ENCODE measurements at regions of chr2 and their contacts with region 1.

Region 1: DNA sequence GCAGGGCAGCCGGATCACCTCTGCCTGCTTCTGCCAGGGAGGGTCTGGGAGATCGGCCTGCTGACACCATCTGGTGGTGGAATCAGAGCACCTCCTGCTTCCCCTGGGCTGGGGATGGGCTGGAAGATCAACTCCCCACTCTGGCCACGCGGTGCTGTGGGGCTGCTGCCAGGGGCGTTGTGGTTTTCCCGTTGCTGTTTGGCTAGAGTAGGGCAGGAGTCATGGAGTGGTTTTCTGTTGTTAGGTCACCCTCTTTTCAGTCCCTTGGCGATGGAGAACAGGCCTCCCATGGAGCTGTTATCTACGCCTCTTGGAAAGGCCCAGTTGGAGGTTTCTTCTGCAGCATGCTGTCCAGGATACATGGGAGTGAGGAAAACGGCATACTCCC is 15.2 kb downstream of the BCL2L11 start:
- DNase-seq: peak; percentile 90
- H3K4me3 ChIP-seq: no peak overlapping the region
- CTCF ChIP-seq: peak; percentile 61

Region 2: GRCh38 chr2:111698743-111699554 is 563.0 kb after region 1 on chr2:
- in situ Hi-C with region 1: loop called (anchors 25 kb)
- DNase-seq: peak; percentile 99
- H3K4me3 ChIP-seq: no peak overlapping the region
- CTCF ChIP-seq: peak; percentile 63